Naive thymus-derived CD4-positive, alpha-beta T cell (primary cell): ENCODE measurements at regions of chr9 and their contacts with region 1.

Region 1: GRCh38 chr9:76403352-76403751 is 9.1 kb upstream of the RFK start:
- DNase-seq: peak in 7 of 9 donors; percentile 39 to 64 (median 51)
- ATAC-seq: peak; percentile 94
- H3K4me3 ChIP-seq: peak overlapping the region; percentile 48
- H3K4me3 Mint-ChIP-seq: peak overlapping the region; percentile 48 to 82 (median 70)
- H3K27ac ChIP-seq: peak overlapping the region; percentile 32
- H3K27ac Mint-ChIP-seq: peak overlapping the region; percentile 67 to 92 (median 77)
- H3K4me1 ChIP-seq: peaks cover 0 to 8% of the 10 kb centered on the region in 2 donors
- H3K4me1 Mint-ChIP-seq: peaks cover 6 to 35% (median 9%) of the 10 kb centered on the region in 7 donors
- H3K27me3 ChIP-seq: no peaks in the 10 kb centered on the region
- H3K27me3 Mint-ChIP-seq: no peaks in the 10 kb centered on the region

Region 2: GRCh38 chr9:76365028-76365427 is 38.3 kb before region 1 on chr9:
- CTCF ChIA-PET with region 1: no interaction called
- POLR2A ChIA-PET with region 1: no interaction called
- intact Hi-C with region 1: no loop called
- DNase-seq: no peak
- ATAC-seq: no peak
- H3K4me3 ChIP-seq: no peak overlapping the region
- H3K4me3 Mint-ChIP-seq: no peak overlapping the region
- H3K27ac ChIP-seq: no peak overlapping the region
- H3K27ac Mint-ChIP-seq: no peak overlapping the region
- H3K4me1 ChIP-seq: no peaks in the 10 kb centered on the region
- H3K4me1 Mint-ChIP-seq: no peaks in the 10 kb centered on the region
- H3K27me3 ChIP-seq: no peaks in the 10 kb centered on the region
- H3K27me3 Mint-ChIP-seq: peaks cover 0 to 17% (median 12%) of the 10 kb centered on the region in 5 donors

Region 3: DNA sequence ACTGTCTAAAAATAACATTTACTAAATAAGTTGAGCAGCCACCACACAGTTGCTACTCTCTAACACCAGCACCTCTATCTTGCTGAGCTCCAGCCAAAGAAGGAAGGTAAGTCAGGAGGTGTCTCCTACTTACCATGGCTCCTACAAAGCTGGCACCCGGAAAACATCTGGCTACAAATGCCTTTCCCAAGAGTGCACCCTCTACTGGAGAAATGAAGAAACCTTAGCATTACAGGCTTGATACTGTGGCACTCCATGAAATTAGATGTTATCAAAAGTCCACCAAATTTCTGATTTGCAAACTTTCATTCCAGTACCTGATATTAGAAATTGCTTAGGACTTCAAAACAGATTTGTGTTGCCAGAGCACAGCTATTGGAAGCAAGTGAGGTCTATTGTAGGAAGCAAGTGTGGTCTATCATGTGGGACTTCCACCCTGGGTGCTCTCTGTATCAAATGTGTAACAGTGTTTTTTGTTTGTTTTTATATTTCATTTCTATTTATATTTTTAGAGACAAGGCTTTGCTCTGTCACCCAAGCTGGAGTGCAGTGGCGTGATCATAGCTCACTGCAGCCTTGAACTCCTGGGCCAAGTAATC is 16.5 kb after region 1 on chr9:
- CTCF ChIA-PET with region 1: no interaction called
- POLR2A ChIA-PET with region 1: no interaction called
- intact Hi-C with region 1: loop called in 1 of 2 experiments (anchors 1 kb)
- DNase-seq: peak in 1 of 9 donors; percentile 5
- ATAC-seq: no peak
- H3K4me3 ChIP-seq: no peak overlapping the region
- H3K4me3 Mint-ChIP-seq: no peak overlapping the region
- H3K27ac ChIP-seq: no peak overlapping the region
- H3K27ac Mint-ChIP-seq: no peak overlapping the region
- H3K4me1 ChIP-seq: no peaks in the 10 kb centered on the region
- H3K4me1 Mint-ChIP-seq: peaks cover 3 to 40% (median 4%) of the 10 kb centered on the region in 7 donors
- H3K27me3 ChIP-seq: no peaks in the 10 kb centered on the region
- H3K27me3 Mint-ChIP-seq: no peaks in the 10 kb centered on the region

Region 4: GRCh38 chr9:76451234-76451633 is 47.9 kb after region 1 on chr9:
- CTCF ChIA-PET with region 1: interaction called, 6 read pairs
- POLR2A ChIA-PET with region 1: no interaction called
- intact Hi-C with region 1: loop called in 1 of 2 experiments (anchors 1 kb)
- DNase-seq: no peak
- ATAC-seq: no peak
- H3K4me3 ChIP-seq: no peak overlapping the region
- H3K4me3 Mint-ChIP-seq: no peak overlapping the region
- H3K27ac ChIP-seq: no peak overlapping the region
- H3K27ac Mint-ChIP-seq: no peak overlapping the region
- H3K4me1 ChIP-seq: no peaks in the 10 kb centered on the region
- H3K4me1 Mint-ChIP-seq: peaks cover 3 to 16% (median 4%) of the 10 kb centered on the region in 7 donors
- H3K27me3 ChIP-seq: no peaks in the 10 kb centered on the region
- H3K27me3 Mint-ChIP-seq: no peaks in the 10 kb centered on the region

Region 5: DNA sequence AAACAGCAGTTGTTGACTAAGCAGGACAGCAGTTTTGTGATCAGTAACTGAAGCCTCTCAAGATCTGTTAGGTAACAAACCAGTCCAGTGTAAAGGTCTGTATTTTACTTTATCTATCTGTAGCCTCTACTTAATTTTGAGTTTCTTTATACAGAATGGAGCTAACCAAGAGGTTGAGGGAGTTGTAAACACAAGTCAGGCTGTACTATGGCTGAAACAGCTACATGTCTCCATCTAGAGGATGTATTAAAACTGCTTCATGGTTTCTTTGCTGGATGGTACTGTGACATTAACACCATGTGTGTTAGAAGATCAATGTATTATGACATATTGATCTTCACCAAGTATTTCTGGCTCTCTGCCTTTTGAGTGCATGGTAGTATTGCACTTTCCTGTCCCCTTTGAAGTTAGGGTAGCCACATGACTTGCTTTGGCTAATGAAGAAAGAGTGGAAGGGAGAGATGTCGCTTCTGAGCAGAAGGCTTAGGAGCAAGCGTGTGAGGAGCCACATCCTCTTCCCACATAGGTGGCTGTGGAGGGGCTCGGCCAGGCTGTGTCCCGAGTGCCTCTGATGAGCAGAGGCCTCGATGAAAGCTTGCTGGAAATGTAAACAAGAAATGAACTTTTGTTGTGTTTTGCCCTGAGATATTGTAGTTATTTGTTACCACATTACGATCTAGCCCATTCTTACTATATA is 255.3 kb after region 1 on chr9:
- CTCF ChIA-PET with region 1: interaction called, 3 read pairs
- POLR2A ChIA-PET with region 1: no interaction called
- intact Hi-C with region 1: loop called (anchors 1 kb)
- DNase-seq: peak in 4 of 9 donors; percentile 21 to 44 (median 25)
- ATAC-seq: peak; percentile 86
- H3K4me3 ChIP-seq: no peak overlapping the region
- H3K4me3 Mint-ChIP-seq: no peak overlapping the region
- H3K27ac ChIP-seq: no peak overlapping the region
- H3K27ac Mint-ChIP-seq: no peak overlapping the region
- H3K4me1 ChIP-seq: peaks cover 0 to 13% of the 10 kb centered on the region in 2 donors
- H3K4me1 Mint-ChIP-seq: peaks cover 0 to 52% (median 12%) of the 10 kb centered on the region in 7 donors
- H3K27me3 ChIP-seq: no peaks in the 10 kb centered on the region
- H3K27me3 Mint-ChIP-seq: peaks cover 0 to 18% (median 0%) of the 10 kb centered on the region in 5 donors

Region 6: GRCh38 chr9:78261403-78262001 is 1858.2 kb after region 1 on chr9:
- CTCF ChIA-PET with region 1: no interaction called
- POLR2A ChIA-PET with region 1: no interaction called
- intact Hi-C with region 1: loop called in 1 of 2 experiments (anchors 5 kb)
- DNase-seq: peak in 4 of 9 donors; percentile 21 to 35 (median 32)
- ATAC-seq: no peak
- H3K4me3 ChIP-seq: no peak overlapping the region
- H3K4me3 Mint-ChIP-seq: no peak overlapping the region
- H3K27ac ChIP-seq: no peak overlapping the region
- H3K27ac Mint-ChIP-seq: peak overlapping the region in 1 of 9 donors; percentile 43
- H3K4me1 ChIP-seq: no peaks in the 10 kb centered on the region
- H3K4me1 Mint-ChIP-seq: peaks cover 0 to 3% (median 0%) of the 10 kb centered on the region in 7 donors
- H3K27me3 ChIP-seq: no peaks in the 10 kb centered on the region
- H3K27me3 Mint-ChIP-seq: no peaks in the 10 kb centered on the region